A673 (cell line): ENCODE measurements at regions of chrX and their contacts with region 1.

Region 1: DNA sequence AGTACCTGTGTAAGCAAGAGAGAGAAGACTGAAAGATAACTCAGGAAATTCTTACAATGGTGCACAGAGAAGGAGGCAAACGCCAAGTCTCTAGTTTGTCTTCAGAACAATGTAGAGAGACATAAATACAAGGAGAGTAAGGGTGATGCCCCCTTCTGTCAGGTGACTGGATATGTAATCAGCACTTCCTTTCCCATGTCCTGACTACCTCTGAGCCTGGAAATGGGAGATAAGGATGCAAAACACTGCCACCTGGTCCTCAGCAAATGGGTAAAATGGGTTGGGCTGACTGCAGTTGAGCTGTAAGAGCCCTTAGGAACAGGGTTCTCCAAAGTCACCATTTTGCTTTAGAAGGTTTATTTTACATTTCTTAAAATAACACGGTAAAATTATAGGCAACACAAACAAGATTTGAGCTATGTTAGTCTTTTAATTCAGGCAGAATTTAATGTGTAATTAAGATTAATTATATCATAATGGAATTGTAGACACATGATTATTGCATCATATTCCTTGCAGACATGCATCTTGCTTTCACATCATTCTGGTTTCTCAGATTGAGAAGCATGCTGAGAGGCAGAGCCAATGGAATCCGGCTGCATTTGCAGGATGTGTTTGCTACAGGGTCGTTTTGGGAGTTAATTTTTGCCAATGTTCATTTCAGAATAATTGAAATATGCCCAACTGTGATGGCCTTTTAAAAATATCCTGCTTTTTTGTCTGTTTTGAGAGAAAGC is 37.2 kb upstream of the ARX start:
- DNase-seq: peak; percentile 72
- H3K4me3 ChIP-seq: no peak overlapping the region
- H3K27ac ChIP-seq: peak overlapping the region; percentile 86
- H3K4me1 ChIP-seq: peaks cover 64% of the 10 kb centered on the region
- H3K27me3 ChIP-seq: no peaks in the 10 kb centered on the region
- CTCF ChIP-seq: peak; percentile 26; the same call in 1 of the 2 replicates

Region 2: DNA sequence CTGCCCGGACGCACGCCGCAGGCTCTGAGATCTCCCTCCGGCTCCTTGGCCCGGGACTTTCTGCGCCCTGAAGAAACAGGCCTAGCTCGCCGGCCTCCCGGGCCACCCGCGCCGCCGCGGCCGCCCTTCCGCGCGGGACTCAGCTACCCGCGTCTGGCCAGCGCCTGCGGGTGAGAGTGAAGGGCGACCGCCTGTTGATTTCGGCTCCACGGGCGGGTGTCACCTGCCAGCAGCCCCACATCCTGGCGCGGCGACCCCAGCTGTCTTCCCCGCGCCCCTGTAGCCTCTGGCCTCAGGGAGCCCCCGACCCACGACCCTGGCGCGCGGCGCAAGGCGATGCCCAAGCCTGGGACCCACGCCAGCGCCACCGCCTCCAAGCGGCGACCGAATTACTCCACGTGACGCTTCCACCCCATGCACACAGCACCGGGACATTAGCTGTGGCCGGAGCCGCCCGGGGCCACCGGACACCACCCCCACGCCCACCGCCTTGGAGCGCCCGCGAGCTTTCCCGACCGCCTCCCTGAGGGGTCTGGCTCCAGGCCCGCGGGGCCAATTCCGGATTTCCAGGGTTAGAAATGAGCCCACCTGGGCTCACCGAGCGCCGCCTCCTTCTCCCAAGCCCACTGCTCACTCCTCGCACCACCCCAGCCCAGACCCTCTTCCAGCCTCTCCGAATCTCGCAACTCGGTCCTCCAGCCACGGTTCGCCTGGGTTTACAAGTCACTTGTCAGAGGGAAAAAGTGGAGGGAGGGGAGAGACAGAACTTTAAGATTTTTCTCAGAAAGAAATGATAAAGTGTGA is 47.4 kb before region 1 on chrX:
- CTCF ChIA-PET with region 1: no interaction called
- POLR2A ChIA-PET with region 1: no interaction called
- intact Hi-C with region 1: no loop called
- DNase-seq: no peak
- H3K4me3 ChIP-seq: no peak overlapping the region
- H3K27ac ChIP-seq: no peak overlapping the region
- H3K4me1 ChIP-seq: peaks cover 12% of the 10 kb centered on the region
- H3K27me3 ChIP-seq: no peaks in the 10 kb centered on the region
- CTCF ChIP-seq: no peak

Region 3: GRCh38 chrX:25015486-25016360 is 37.2 kb before region 1 on chrX and contains the start of gene ARX:
- CTCF ChIA-PET with region 1: no interaction called
- POLR2A ChIA-PET with region 1: interaction called, 4 read pairs
- intact Hi-C with region 1: loop called (anchors 5 kb)
- DNase-seq: peak; percentile 91
- H3K4me3 ChIP-seq: peak within 1 kb of the TSS; percentile 59
- H3K27ac ChIP-seq: peak within 1 kb of the TSS; percentile 66
- H3K4me1 ChIP-seq: peaks cover 31% of the 10 kb centered on the region
- H3K27me3 ChIP-seq: no peaks in the 10 kb centered on the region
- CTCF ChIP-seq: no peak
- total RNA-seq, gene ARX: 32.0 and 44.4 TPM in 2 replicates

Region 4: GRCh38 chrX:25067271-25068172 is 14.6 kb after region 1 on chrX:
- CTCF ChIA-PET with region 1: no interaction called
- POLR2A ChIA-PET with region 1: no interaction called
- intact Hi-C with region 1: loop called (anchors 2 kb)
- DNase-seq: peak; percentile 74
- H3K4me3 ChIP-seq: no peak overlapping the region
- H3K27ac ChIP-seq: peak overlapping the region; percentile 97
- H3K4me1 ChIP-seq: peaks cover 50% of the 10 kb centered on the region
- H3K27me3 ChIP-seq: no peaks in the 10 kb centered on the region
- CTCF ChIP-seq: peak; percentile 39; the same call in 1 of the 2 replicates